A549 (cell line): ENCODE measurements at regions of chr20 and their contacts with region 1.

Region 1: DNA sequence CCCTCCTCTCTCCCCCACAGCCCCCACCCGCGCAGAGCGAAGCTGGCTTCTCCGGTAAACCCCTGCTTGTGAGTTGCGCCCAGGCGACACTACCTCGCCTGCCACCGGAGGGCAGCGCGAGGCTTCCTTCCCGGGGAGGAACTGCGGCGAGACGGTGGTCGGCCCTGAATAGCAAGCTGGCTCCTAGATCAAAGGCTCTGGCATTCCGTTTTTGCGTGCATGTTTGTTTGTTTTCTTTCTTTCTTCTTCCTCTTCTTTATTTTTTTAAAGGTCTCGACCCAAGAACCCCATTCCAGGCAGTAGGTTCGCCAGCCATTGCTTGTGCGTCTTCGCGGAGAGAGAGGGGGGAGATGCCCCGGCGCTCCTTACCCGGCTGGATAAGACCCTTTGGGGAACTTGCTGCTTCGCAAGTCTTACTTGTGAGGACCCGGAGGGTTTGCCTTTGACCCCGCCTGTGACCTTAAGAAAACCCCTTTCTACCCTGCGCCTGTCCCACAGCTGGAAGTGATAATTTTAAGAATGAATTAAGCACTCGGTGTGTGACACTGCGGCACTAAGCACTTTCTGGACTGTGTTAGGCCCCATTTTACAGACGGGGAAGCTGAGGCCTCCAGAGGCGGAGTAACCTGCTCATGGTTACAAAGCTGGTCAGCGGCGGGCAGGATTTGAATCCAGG is 92.7 kb upstream of the SIRPA start:
- DNase-seq: peak; percentile 70 to 78
- ATAC-seq: peak; percentile 84 to 87
- H3K4me3 ChIP-seq: peak overlapping the region; percentile 28
- H3K27ac ChIP-seq: peak overlapping the region; percentile 47 to 62; a peak in 5 of 6 replicates
- H3K4me1 ChIP-seq: peaks cover 11% of the 10 kb centered on the region
- CTCF ChIP-seq: peak; percentile 81
- EP300 ChIP-seq: no peak
- POLR2A ChIP-seq: no peak
- RAD21 ChIP-seq: peak; percentile 84 to 95

Region 2: GRCh38 chr20:1776681-1777475 is 25.6 kb before region 1 on chr20:
- CTCF ChIA-PET with region 1: interaction called, 119 read pairs
- POLR2A ChIA-PET with region 1: no interaction called
- DNase-seq: peak; percentile 69 to 89
- ATAC-seq: peak; percentile 95 to 99
- H3K4me3 ChIP-seq: peak overlapping the region; percentile 79
- H3K27ac ChIP-seq: peak overlapping the region; percentile 80 to 91
- H3K4me1 ChIP-seq: peaks cover 20% of the 10 kb centered on the region
- CTCF ChIP-seq: peak; percentile 76
- EP300 ChIP-seq: no peak
- POLR2A ChIP-seq: peak; percentile 39; the same call in 1 of the 2 replicates
- RAD21 ChIP-seq: peak; percentile 71 to 82

Region 3: GRCh38 chr20:1816384-1817381 is 14.2 kb after region 1 on chr20:
- CTCF ChIA-PET with region 1: interaction called, 53 read pairs
- POLR2A ChIA-PET with region 1: no interaction called
- DNase-seq: peak in 1 of 2 experiments; percentile 55
- ATAC-seq: peak; percentile 27 to 58; a peak in 5 of 6 replicates
- H3K4me3 ChIP-seq: no peak overlapping the region
- H3K27ac ChIP-seq: peak overlapping the region; percentile 52 to 71
- H3K4me1 ChIP-seq: peaks cover 49% of the 10 kb centered on the region
- CTCF ChIP-seq: no peak
- EP300 ChIP-seq: peak; percentile 16 to 30; a peak in 2 of 5 replicates
- POLR2A ChIP-seq: no peak
- RAD21 ChIP-seq: peak in 1 of 2 experiments; percentile 4; a peak in 1 of 5 replicates

Region 4: DNA sequence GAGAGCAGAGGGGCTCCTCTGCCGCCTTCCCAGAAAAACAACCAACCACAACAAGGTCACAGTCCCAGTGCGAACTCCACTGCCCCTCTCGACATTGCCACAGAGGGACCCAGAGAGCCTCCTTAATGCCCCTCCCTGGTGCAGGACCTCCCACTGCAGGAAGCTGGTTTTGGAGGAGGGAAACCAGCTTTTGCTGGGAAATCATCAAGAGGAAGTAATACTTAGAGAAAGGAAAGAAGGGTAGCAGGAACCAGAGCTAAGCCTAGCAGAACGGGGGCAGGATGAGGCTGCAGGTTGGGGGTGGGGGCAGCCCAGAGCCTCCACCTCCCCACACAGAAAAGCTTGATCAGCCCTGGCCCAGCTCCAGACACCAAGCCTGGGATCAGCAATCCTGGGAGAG is 54.9 kb after region 1 on chr20:
- CTCF ChIA-PET with region 1: interaction called, 24 read pairs
- POLR2A ChIA-PET with region 1: no interaction called
- DNase-seq: no peak
- ATAC-seq: no peak
- H3K4me3 ChIP-seq: no peak overlapping the region
- H3K27ac ChIP-seq: no peak overlapping the region
- H3K4me1 ChIP-seq: no peaks in the 10 kb centered on the region
- CTCF ChIP-seq: no peak
- EP300 ChIP-seq: no peak
- POLR2A ChIP-seq: no peak
- RAD21 ChIP-seq: no peak

Region 5: GRCh38 chr20:1888796-1889463 is 86.4 kb after region 1 on chr20:
- CTCF ChIA-PET with region 1: interaction called, 26 read pairs
- POLR2A ChIA-PET with region 1: no interaction called
- DNase-seq: no peak
- ATAC-seq: no peak
- H3K4me3 ChIP-seq: no peak overlapping the region
- H3K27ac ChIP-seq: no peak overlapping the region
- H3K4me1 ChIP-seq: peaks cover 15% of the 10 kb centered on the region; the same call in 1 of the 3 replicates
- CTCF ChIP-seq: no peak
- EP300 ChIP-seq: no peak
- POLR2A ChIP-seq: no peak
- RAD21 ChIP-seq: no peak

Region 6: DNA sequence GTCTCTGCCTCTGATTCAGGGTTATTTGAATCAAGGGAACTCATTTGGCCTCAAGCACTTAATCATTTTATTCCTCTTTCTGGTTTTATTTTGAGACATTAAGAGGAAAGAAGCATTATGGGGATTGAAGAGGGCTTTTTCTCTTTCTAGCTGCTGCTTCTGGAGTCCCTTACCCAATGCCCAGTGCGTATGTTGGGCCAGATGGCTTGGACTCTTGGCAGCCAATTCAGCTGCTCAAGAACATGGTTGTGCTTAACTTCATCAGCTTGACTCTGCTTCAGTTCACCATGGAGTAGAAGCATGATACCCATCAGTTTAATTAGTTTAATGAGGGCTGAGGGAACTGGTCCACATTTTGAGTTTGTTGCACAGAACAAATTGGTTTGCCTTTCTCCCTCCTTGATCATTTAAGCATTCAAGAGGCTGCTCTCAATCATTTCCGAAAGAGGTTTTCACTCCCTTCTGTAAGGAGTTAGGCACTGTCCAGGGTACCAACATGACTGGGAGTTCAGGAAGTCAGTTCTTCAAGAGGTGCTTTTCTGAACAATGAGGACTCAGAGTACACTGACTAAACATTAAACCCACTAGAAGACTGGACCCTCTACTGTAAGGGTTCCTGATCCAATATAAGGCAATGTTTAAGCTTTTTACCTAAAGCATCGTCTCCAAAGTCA is 176.7 kb after region 1 on chr20:
- CTCF ChIA-PET with region 1: no interaction called
- POLR2A ChIA-PET with region 1: no interaction called
- DNase-seq: no peak
- ATAC-seq: no peak
- H3K4me3 ChIP-seq: no peak overlapping the region
- H3K27ac ChIP-seq: no peak overlapping the region
- H3K4me1 ChIP-seq: no peaks in the 10 kb centered on the region
- CTCF ChIP-seq: no peak
- EP300 ChIP-seq: no peak
- POLR2A ChIP-seq: no peak
- RAD21 ChIP-seq: no peak

Region 7: GRCh38 chr20:2217857-2218539 is 415.5 kb after region 1 on chr20:
- CTCF ChIA-PET with region 1: no interaction called
- POLR2A ChIA-PET with region 1: no interaction called
- DNase-seq: no peak
- ATAC-seq: no peak
- H3K4me3 ChIP-seq: no peak overlapping the region
- H3K27ac ChIP-seq: no peak overlapping the region
- H3K4me1 ChIP-seq: no peaks in the 10 kb centered on the region
- CTCF ChIP-seq: no peak
- EP300 ChIP-seq: no peak
- POLR2A ChIP-seq: no peak
- RAD21 ChIP-seq: no peak